ENCODE measurements at regions of chr19 and their contacts with region 1.

Region 1: DNA sequence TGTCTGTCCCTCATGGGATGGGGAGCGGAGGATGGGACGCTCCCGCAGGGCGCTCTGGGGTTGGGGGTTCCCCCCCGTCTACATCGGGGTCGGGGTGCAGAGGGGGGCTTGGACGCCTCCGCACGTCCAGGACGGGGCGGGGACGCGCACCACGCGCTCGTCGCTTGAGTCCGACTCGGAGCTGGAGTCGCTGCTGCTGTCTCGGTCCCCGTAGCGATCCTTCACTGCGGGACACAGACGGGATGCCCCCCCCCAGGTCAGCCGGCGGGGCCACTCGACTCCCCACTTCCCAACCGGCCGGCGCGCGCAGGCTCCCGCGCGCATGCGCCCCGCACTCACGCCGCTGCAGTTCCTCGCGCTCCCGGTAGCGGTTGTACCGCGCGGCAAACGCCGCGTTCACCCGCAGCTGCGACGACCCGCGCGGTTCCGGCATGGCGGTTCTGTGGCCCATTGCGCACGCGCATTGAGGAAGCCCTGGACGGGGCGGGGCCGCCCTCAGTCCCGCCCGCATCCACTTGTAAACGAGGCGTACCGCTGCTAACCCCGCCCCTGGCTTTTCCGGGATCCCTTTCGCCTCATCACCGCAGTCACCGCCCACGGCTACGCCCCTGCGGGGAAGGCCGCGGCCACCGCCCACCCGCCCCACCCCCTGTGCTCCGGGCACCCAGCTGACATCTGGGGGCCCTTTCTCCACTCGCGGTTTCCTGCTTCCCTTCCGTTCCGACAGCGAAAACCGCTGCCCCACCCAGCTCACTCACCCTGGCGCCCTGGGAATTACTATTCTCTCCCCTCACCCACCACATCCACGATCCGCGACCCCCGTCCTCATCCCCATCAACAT is at the start of gene KRI1:
- DNase-seq: peak; percentile 99
- ATAC-seq: peak; percentile 64
- H3K4me3 Mint-ChIP-seq: peak within 1 kb of the TSS; percentile 95
- H3K27ac Mint-ChIP-seq: peak within 1 kb of the TSS; percentile 98
- H3K4me1 Mint-ChIP-seq: peaks cover 46% of the 10 kb centered on the region
- H3K27me3 Mint-ChIP-seq: no peaks in the 10 kb centered on the region
- CTCF ChIP-seq: no peak
- total RNA-seq, gene KRI1: 44.7 and 48.1 TPM in 2 replicates

Region 2: GRCh38 chr19:10106100-10106936 is 459.5 kb before region 1 on chr19 and contains the start of gene PPAN:
- CTCF ChIA-PET with region 1: no interaction called
- POLR2A ChIA-PET with region 1: interaction called, 7 read pairs
- intact Hi-C with region 1: loop called (anchors 2 kb)
- DNase-seq: peak; percentile 91
- ATAC-seq: peak; percentile 54
- H3K4me3 Mint-ChIP-seq: peak within 1 kb of the TSS; percentile 86
- H3K27ac Mint-ChIP-seq: peak within 1 kb of the TSS; percentile 99
- H3K4me1 Mint-ChIP-seq: peaks cover 73% of the 10 kb centered on the region
- H3K27me3 Mint-ChIP-seq: no peaks in the 10 kb centered on the region
- CTCF ChIP-seq: no peak
- total RNA-seq, gene PPAN: 107 and 119 TPM in 2 replicates

Region 3: GRCh38 chr19:10332955-10333757 is 232.6 kb before region 1 on chr19 and contains the start of gene RAVER1:
- CTCF ChIA-PET with region 1: no interaction called
- POLR2A ChIA-PET with region 1: no interaction called
- intact Hi-C with region 1: loop called (anchors 1 kb)
- DNase-seq: peak; percentile 93
- ATAC-seq: peak; percentile 97
- H3K4me3 Mint-ChIP-seq: peak within 1 kb of the TSS; percentile 96
- H3K27ac Mint-ChIP-seq: peak within 1 kb of the TSS; percentile 96
- H3K4me1 Mint-ChIP-seq: peaks cover 26% of the 10 kb centered on the region
- H3K27me3 Mint-ChIP-seq: no peaks in the 10 kb centered on the region
- CTCF ChIP-seq: no peak
- total RNA-seq, gene RAVER1: 77.0 and 80.8 TPM in 2 replicates

Region 4: DNA sequence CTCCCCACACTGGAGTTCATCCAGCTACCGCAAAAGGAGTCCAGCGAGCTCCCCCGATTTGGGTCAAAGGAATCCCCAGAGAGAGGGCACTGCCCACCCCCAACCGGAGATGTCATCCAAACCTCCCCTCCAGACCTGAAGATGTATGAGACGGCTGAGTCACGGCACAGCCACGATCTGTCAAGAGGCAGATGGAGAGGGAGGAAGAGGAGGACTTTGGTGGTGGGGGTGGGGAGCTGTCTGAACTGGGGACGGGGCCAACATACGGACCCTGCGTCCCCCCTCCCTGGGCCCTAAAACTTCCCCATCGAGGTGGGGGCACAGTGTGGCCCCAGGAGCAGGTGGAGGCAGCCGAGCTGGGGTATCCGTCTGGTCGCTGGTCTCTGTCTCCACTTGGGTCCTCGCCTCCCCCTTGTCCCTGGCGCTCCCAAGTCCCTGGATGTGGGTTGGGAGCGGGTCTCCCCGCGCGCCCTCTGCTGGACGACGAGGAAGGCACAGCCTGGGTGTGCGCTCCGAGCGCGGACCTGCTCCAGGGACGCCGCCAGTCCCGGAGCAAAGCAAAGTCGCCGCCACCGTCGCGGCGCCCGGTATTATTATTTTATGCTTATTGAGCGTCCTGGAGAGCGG is 141.7 kb before region 1 on chr19:
- CTCF ChIA-PET with region 1: no interaction called
- POLR2A ChIA-PET with region 1: interaction called, 10 read pairs
- intact Hi-C with region 1: loop called (anchors 5 kb)
- DNase-seq: no peak
- ATAC-seq: peak; percentile 9
- H3K4me3 Mint-ChIP-seq: peak overlapping the region; percentile 85
- H3K27ac Mint-ChIP-seq: peak overlapping the region; percentile 72
- H3K4me1 Mint-ChIP-seq: peaks cover 87% of the 10 kb centered on the region
- H3K27me3 Mint-ChIP-seq: peaks cover 31% of the 10 kb centered on the region
- CTCF ChIP-seq: peak; percentile 42

Region 5: GRCh38 chr19:10552596-10553053 is 13.2 kb before region 1 on chr19:
- CTCF ChIA-PET with region 1: interaction called, 9 read pairs
- POLR2A ChIA-PET with region 1: interaction called, 46 read pairs
- intact Hi-C with region 1: loop called (anchors 1 kb)
- DNase-seq: no peak
- ATAC-seq: no peak
- H3K4me3 Mint-ChIP-seq: no peak overlapping the region
- H3K27ac Mint-ChIP-seq: peak overlapping the region; percentile 92
- H3K4me1 Mint-ChIP-seq: peaks cover 38% of the 10 kb centered on the region
- H3K27me3 Mint-ChIP-seq: no peaks in the 10 kb centered on the region
- CTCF ChIP-seq: no peak

Region 6: DNA sequence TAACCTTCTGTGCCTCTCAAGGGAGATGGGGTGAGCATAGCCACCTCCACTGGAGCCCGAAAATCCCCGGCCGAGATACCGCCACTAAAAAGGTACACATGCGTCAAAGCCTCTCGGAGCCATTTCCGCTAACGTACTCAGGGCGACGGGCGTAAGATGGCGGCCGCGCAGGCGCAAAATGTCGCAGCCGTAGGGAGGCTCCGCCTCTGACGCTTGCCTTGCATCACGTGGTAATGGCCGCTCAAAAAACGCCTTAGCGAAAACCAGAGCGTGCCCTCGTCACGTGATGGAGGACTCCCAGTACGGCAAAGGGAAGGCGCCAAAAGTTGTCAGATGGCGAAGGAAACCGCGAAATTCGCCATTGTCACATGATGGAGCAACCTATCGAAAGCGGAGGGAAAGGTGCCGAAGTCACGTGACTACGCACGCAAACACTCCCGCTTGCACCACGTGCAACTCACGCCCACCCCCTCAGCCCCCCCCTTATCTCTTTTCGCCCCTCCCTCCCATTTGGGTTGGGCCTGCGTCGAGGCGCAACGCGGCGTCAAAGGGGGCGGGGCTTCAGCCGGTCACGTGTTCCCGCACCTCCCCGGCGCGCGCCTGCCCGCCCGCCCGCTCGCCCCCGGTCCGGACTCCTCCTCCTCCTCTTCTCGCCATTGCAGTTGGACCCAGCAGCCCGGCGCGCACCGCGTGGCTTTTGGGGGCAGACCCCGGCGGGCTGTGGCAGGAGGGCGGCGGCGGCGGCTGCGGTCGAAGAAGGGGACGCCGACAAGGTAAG is 88.1 kb after region 1 on chr19 and contains the start of gene ILF3:
- CTCF ChIA-PET with region 1: no interaction called
- POLR2A ChIA-PET with region 1: interaction called, 9 read pairs
- intact Hi-C with region 1: loop called (anchors 1 kb)
- DNase-seq: peak; percentile 98
- ATAC-seq: peak; percentile 78
- H3K4me3 Mint-ChIP-seq: peak within 1 kb of the TSS; percentile 95
- H3K27ac Mint-ChIP-seq: peak within 1 kb of the TSS; percentile 99
- H3K4me1 Mint-ChIP-seq: peaks cover 48% of the 10 kb centered on the region
- H3K27me3 Mint-ChIP-seq: peaks cover 1% of the 10 kb centered on the region
- CTCF ChIP-seq: no peak
- total RNA-seq, gene ILF3: 373 and 399 TPM in 2 replicates

Measured in activated B cell treated with CpG ODN at 0.5 μM for 24 hours (primary cell).